ENCODE measurements at regions of chr4 and their contacts with region 1.

Region 1: GRCh38 chr4:68732653-68733466 is 62.4 kb upstream of the UGT2B15 start:
- DNase-seq: peak; percentile 53
- H3K4me3 Mint-ChIP-seq: peak overlapping the region; percentile 6
- H3K27ac Mint-ChIP-seq: peak overlapping the region; percentile 61
- H3K4me1 Mint-ChIP-seq: peaks cover 45% of the 10 kb centered on the region
- H3K27me3 Mint-ChIP-seq: no peaks in the 10 kb centered on the region
- CTCF ChIP-seq: no peak

Region 2: DNA sequence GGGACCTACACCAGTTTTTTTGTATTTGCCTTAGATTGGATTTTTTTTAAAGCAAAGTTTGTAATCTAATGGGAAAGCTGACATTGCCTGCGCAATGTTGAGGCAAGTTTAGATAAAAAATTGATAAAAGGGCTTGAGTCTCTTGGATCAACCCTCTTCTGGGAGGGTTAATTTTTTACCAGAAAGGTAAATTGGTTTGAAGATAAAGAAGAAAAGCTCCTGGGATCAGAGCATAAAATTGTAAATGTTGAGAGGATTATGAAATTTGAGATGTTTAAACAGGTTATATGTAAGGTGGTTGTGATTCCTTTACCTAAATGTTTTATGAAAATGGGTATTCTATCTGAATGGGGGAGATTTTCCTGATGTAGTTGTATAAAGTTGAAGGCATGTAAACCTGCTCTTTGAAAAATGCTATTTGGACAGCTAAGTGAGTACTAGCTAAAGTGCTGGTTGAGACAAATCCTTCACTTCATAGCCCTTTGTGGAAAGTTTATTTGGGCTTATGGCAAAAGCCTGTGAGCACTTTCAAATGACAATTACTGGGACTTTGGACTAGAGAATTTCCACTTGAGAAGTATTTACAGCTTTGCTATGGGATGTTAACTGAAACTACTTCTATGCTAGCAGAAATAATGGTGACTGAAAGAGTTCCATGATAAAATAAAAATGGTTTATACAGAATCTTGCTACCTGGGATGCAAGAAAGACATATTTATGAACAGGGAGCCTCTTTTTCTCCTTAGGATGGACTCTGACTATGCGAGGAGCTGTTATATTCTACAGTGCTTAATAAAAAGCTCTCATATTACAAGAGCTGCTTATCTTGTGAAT is 139.2 kb after region 1 on chr4:
- CTCF ChIA-PET with region 1: interaction called, 3 read pairs
- intact Hi-C with region 1: loop called (anchors 5 kb)
- DNase-seq: no peak
- H3K4me3 Mint-ChIP-seq: no peak overlapping the region
- H3K27ac Mint-ChIP-seq: peak overlapping the region; percentile 31
- H3K4me1 Mint-ChIP-seq: peaks cover 16% of the 10 kb centered on the region
- H3K27me3 Mint-ChIP-seq: no peaks in the 10 kb centered on the region
- CTCF ChIP-seq: no peak

Region 3: DNA sequence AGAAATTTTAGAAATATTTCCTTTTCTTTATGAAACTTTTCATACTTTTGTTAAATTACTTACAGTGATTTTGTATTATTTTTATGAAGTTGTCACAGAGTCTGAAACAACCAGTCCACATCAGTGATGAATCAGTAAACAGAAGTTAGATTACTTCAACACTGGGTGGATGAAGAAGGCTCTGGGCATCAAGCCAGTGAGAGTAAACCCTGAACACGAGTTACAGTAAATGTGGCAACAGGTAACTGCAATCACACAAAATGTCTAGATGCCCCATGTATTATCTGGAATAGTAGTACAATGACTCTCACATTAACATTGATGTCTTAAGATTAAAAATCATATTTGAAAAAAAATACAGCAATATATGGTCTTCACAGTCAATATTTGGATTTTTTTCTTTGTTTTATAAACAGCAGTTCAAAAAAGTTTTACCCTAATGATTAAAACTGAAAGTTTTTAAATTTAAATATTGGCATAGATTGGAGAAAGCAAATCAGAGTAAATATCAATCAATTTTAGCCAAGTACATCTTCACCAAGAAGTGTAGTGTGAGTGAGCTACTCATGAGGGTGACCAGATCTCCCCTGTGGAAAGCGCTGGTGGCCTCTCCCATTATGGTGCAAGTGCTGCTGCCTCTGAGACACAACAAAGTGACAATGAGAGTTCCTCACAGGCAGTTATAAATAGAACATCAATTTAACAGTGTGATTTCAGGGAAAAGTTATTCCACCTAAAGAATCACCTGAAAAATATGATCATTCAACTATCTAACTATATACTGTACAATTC is 300.2 kb after region 1 on chr4:
- CTCF ChIA-PET with region 1: no interaction called
- intact Hi-C with region 1: loop called (anchors 5 kb)
- DNase-seq: no peak
- H3K4me3 Mint-ChIP-seq: no peak overlapping the region
- H3K27ac Mint-ChIP-seq: peak overlapping the region; percentile 85
- H3K4me1 Mint-ChIP-seq: peaks cover 54% of the 10 kb centered on the region
- H3K27me3 Mint-ChIP-seq: no peaks in the 10 kb centered on the region
- CTCF ChIP-seq: no peak

Measured in Calu3 (cell line).